AG04450 (cell line): ENCODE measurements at regions of chr20 and their contacts with region 1.

Region 1: GRCh38 chr20:46132705-46133120 is 14.6 kb downstream of the CD40 start:
- DNase-seq: peak; percentile 8
- H3K4me3 ChIP-seq: no peak overlapping the region
- H3K27ac ChIP-seq: no peak overlapping the region
- H3K27me3 ChIP-seq: peaks cover 26% of the 10 kb centered on the region
- CTCF ChIP-seq: peak; percentile 83

Region 2: DNA sequence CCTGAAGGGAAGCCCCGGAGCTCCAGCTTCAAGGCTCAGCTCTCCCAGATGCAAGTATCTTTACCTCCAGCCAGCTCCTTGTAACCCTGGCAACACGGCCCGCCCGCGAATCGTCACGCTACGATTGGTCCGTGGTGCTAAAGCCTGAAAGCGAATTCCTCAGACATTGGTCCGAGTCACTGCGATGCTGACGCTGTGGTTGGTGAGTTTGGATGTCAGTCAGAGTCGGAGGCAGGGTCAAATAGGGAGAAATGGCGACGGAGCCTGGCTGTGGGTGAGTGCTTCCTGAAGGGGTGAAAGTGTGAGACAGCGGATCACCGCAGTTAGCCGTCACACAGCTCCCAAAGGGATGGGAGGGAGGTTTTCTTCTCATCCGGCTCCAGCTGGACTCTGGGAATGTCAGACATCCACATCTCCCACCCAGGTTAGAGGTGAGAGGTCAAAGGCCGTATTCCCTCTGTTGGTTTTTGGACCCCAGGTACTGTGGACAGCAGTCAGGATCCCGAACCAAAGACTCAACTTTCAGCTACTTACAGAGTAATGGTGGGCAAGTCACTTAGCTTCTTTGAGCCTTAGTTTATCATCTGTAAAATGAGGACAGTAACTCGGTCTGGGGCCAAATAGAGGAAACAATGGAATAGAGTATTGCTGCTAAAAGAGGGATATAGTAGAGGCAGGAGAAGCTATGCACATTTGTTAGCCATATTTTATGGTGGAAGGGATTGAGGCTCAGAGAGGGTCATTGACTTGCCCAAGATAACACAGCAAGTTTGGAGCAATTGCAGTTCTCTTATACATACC is 251.5 kb before region 1 on chr20 and contains the start of gene ZSWIM1:
- CTCF ChIA-PET with region 1: no interaction called
- POLR2A ChIA-PET with region 1: no interaction called
- DNase-seq: peak; percentile 98
- H3K4me3 ChIP-seq: peak within 1 kb of the TSS; percentile 96
- H3K27ac ChIP-seq: peak within 1 kb of the TSS; percentile 21
- H3K27me3 ChIP-seq: no peaks in the 10 kb centered on the region
- CTCF ChIP-seq: no peak
- polyA plus RNA-seq, gene ZSWIM1: 5.3 and 6.5 TPM in 2 replicates

Region 3: GRCh38 chr20:46076806-46077205 is 55.9 kb before region 1 on chr20:
- CTCF ChIA-PET with region 1: no interaction called
- POLR2A ChIA-PET with region 1: no interaction called
- DNase-seq: no peak
- H3K4me3 ChIP-seq: no peak overlapping the region
- H3K27ac ChIP-seq: no peak overlapping the region
- H3K27me3 ChIP-seq: no peaks in the 10 kb centered on the region
- CTCF ChIP-seq: no peak

Region 4: GRCh38 chr20:46349035-46349741 is 216.5 kb after region 1 on chr20:
- CTCF ChIA-PET with region 1: interaction called, 49 read pairs
- POLR2A ChIA-PET with region 1: no interaction called
- DNase-seq: no peak
- H3K4me3 ChIP-seq: no peak overlapping the region
- H3K27ac ChIP-seq: no peak overlapping the region
- H3K27me3 ChIP-seq: peaks cover 6% of the 10 kb centered on the region
- CTCF ChIP-seq: peak; percentile 69

Region 5: DNA sequence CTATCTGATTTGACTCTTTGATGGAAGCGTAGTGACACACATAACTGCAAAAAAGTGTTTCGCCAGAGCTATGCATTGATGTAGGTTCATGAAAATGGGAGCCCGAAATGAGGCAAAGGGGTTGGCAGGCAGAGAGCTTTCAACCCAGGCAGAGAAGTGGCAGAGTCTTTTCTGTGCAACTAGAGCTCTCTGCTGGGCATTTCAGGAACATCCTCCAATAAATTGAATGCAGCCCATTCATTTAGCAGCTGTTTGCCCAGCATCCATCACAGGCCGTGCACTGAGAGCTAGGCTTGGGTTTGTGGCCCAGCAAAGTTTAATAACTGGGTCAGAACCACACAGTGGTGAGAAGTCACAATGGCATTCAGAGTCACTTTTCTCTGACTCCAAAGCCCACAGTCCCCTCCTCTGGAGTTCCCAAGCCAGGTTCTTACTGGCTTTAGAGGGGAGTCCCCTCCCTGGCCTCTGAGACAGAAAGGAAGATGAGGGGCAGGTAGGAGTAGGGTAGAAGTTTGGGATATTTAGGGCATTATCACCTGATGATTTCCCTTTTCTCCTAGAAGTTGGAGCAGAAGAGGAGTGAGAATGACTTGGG is 305.5 kb after region 1 on chr20:
- CTCF ChIA-PET with region 1: interaction called, 17 read pairs
- POLR2A ChIA-PET with region 1: no interaction called
- DNase-seq: no peak
- H3K4me3 ChIP-seq: no peak overlapping the region
- H3K27ac ChIP-seq: no peak overlapping the region
- H3K27me3 ChIP-seq: peaks cover 2% of the 10 kb centered on the region
- CTCF ChIP-seq: peak; percentile 48